OCI-LY7 (cell line): ENCODE measurements at regions of chr17 and their contacts with region 1.

Region 1: DNA sequence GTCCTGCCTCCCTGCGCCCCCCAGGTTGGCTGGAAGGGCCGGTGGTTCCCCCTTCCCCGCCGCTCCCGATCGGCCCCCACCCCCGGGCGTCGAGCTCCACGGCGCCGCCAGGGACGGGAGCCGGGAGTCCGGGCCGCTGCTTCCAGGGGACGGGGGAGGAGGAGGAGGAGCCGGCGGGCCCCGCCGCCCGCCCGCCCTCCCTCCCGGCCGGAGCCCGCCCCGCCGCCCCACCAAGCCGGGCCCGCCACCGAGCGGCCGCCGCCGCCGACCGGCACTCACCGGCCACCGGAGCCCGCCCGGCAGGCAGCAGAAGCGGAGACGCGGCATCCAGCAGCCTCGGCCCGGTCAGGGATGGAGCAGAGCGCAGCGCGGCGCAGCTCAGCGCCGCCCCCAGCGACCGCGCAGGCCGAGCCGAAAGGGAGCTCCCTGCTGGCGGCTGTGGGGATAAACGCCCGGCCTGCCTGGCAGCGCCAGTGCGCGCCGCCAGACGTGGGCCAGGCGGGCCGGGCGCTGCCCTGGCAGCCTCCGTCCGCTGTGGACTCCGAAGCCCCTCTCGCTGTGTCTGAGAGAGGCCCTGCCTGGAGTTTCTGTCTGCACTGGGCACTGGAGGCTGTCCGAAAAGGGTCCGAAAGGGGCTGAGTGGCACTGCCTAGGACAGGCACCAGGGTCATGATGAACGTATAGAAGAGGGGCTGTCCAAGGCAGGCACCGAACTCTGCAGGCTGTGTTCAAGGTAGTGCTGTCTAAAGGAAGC is at the start of gene MYO18A:
- DNase-seq: peak; percentile 88
- H3K4me3 ChIP-seq: peak within 1 kb of the TSS; percentile 68
- H3K27ac ChIP-seq: no peak within 1 kb of the TSS
- H3K4me1 ChIP-seq: peaks cover 45% of the 10 kb centered on the region
- CTCF ChIP-seq: peak; percentile 79
- total RNA-seq, gene MYO18A: 124 and 131 TPM in 2 replicates

Region 2: DNA sequence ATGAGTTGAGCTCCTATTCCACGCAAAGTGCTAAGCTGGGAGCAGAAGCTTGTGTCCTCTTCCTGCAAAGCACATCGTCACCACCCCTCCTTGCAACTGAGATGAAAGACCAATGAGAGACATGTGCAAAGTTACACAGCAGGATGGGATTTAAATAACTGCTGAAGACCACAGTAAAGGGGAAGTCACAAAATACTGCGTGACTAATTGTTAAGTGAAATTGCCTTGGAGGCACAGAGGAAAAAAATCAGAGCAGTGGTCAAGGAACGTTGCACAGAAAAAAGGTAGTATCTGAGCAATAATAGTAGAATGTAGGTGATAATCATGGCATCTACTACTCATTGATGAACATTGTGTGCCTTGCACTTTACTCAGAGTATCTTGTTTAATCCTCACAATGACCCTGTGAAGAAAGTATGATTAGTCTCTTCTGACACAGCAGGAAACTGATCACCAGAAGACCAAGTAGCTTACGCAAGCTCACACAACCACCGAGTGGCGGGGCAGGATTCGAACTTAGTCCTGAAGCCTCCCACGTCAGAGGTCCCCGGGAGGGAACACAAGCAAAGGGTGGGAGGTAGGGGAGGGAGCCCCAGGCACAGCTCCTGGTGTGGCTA is 15.4 kb after region 1 on chr17:
- CTCF ChIA-PET with region 1: interaction called, 8 read pairs
- POLR2A ChIA-PET with region 1: interaction called, 20 read pairs
- intact Hi-C with region 1: no loop called
- DNase-seq: peak; percentile 88
- H3K4me3 ChIP-seq: peak overlapping the region; percentile 47
- H3K27ac ChIP-seq: peak overlapping the region; percentile 71
- H3K4me1 ChIP-seq: peaks cover 27% of the 10 kb centered on the region
- CTCF ChIP-seq: no peak